ENCODE measurements at regions of chr1 and their contacts with region 1.

Region 1: DNA sequence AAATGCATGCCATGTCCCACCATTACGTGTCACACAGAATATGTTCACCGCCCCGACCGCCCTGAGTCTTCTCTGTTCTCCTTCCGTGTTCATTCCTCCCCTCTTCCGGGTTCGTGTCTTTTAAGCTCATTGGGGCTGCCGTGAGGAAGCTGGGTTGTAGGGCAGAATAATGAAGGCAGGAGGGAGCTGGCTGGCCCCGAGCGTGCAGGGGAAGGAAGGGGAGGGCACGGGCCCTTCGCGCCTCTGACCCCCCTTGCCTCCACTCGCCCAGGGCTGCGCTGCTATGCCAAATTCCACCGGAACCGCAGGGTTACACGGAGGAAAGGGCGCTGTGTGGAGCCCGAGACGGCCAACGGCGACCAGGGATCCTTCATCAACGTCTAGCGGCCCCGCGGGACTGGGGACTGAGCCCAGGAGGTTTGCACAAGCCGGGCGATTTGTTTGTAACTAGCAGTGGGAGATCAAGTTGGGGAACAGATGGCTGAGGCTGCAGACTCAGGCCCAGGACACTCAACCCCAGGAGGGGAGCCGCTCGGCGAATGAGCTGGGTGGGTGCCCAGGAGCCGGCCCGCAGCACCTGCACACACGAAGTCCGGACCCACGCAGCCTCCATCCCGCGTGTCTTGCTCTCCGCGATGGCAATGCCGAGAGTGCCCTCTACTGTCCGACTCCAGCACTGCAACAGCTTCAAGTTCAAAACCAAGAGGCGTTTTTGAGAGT is 16.5 kb upstream of the AGTRAP start:
- DNase-seq: peak; percentile 83 to 94 (median 90)
- H3K4me3 ChIP-seq: peak overlapping the region; percentile 15 to 74 (median 65)
- H3K27ac ChIP-seq: peak overlapping the region in 1 of 2 experiments; percentile 40
- H3K4me1 ChIP-seq: peaks cover 0 to 19% (median 14%) of the 10 kb centered on the region in 4 experiments
- H3K27me3 ChIP-seq: peaks cover 0 to 2% (median 0%) of the 10 kb centered on the region in 5 experiments

Region 2: DNA sequence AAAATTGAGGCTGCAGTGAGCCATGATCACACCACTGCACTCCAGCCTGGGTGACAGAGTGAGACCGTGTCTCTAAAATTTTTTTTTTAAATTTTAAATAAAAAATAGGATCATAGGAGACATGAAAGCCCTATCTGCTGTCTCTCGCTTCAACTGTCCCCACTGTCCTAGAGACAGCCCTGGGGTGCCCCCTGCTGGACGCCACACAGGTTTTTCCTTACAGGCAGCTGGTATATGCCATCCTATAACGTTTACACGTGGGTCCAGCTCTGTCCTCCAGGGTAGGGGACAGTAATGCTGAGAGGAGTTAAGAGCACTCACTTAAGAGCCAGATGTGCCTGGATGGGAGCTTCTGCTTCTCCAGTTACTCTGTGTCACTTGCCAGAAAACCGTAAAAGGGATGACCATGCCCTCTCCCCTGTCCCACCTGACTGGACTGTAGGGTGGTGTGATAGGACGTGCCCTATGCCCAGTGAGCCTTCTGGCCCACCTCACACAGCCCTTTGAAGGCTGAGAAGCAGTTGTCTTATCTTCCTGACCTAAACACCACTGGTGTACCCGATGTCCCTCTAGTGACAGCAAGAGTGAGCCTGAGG is 73.7 kb before region 1 on chr1:
- CTCF ChIA-PET with region 1: interaction called, 25 read pairs
- POLR2A ChIA-PET with region 1: no interaction called
- DNase-seq: peak; percentile 74 to 90 (median 84)
- H3K4me3 ChIP-seq: no peak overlapping the region
- H3K27ac ChIP-seq: no peak overlapping the region
- H3K4me1 ChIP-seq: peaks cover 0 to 14% (median 9%) of the 10 kb centered on the region in 4 experiments
- H3K27me3 ChIP-seq: peaks cover 0 to 32% (median 11%) of the 10 kb centered on the region in 5 experiments

Region 3: DNA sequence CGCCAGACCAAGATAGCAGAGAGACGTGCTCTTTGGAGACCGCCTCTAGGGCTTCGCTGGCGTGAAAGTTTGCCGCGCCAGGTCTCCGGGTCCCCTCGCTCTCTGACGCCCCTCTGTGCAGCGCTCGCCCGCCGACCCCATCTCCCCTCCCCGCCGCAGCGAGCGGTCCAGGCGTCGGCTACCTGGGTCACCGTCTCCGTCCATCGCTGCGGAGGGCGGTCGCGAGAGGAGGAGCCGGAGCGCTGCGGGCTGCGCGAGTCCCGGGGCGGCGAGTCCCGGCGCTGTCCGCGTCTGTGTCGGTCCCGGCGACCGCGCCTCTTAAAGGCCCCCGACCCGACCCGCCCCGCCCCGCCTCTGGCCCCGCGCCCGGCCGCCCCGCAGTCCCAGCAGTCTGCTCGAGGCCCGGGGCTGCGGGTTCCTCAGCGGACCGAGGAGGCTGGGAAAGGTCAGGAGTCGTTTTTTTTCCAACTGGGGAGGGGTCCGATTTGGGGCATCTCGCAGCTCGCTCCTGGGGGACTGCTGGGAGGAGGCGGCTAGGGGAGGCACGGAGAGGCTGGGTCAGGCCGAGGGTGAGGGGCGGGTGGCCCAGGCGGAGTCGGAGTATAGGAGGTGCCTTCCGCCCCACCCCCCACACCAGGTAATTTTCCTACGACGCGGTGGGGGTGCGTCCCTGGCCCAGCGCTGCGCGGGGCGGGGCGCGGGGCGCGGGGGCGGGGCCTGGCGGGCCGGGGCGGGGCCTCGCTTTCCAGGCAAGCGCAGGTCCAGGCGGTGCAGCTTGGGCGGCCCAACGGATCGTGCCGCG is 65.1 kb before region 1 on chr1 and contains the starts of genes FBXO2 and FBXO44:
- CTCF ChIA-PET with region 1: interaction called, 25 read pairs
- POLR2A ChIA-PET with region 1: no interaction called
- DNase-seq: peak in 1 of 3 donors; percentile 36
- H3K4me3 ChIP-seq: peak within 1 kb of the TSS; percentile 18 to 75 (median 60)
- H3K27ac ChIP-seq: no peak within 1 kb of the TSS
- H3K4me1 ChIP-seq: peaks cover 0 to 26% (median 25%) of the 10 kb centered on the region in 4 experiments
- H3K27me3 ChIP-seq: peaks cover 2 to 38% (median 11%) of the 10 kb centered on the region in 5 experiments

Region 4: DNA sequence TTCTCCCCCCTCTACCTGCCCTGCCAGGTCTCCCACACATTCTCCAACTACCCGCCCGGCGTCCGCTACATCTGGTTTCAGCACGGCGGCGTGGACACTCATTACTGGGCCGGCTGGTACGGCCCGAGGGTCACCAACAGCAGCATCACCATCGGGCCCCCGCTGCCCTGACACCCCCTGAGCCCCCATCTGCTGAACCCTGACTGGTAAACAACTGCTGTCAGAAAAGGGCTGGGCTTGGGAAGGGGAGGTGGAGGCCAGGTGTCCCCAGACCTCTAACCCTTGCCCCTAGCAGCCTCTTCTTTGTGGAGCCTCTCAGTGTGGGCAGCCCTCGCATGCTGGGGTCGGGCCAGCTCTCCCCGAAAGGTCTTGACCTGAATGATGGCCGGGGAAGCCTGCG is 58.4 kb before region 1 on chr1:
- CTCF ChIA-PET with region 1: interaction called, 33 read pairs
- POLR2A ChIA-PET with region 1: interaction called, 6 read pairs
- DNase-seq: no peak
- H3K4me3 ChIP-seq: no peak overlapping the region
- H3K27ac ChIP-seq: no peak overlapping the region
- H3K4me1 ChIP-seq: peaks cover 0 to 13% (median 9%) of the 10 kb centered on the region in 4 experiments
- H3K27me3 ChIP-seq: no peaks in the 10 kb centered on the region

Region 5: DNA sequence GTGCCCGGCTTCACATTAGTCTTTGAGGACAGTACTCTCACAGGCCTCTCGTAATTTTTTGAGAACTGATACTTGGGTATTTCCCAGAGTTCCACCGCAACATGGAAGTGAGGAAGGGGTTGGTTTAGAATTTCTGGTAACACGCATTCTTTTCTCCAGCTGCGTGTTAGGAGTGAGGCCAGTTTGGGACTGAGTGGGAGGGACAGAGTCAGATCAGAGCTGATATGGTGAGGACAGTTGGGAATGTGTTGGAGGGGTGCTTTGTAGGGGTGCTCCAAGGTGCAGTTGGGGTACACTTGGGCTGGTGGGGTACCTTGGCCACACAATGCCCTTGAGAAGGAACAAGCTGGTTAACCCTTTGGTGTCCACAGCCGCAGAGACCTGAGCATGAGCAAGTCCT is 48.7 kb before region 1 on chr1:
- CTCF ChIA-PET with region 1: interaction called, 10 read pairs
- POLR2A ChIA-PET with region 1: no interaction called
- DNase-seq: no peak
- H3K4me3 ChIP-seq: no peak overlapping the region
- H3K27ac ChIP-seq: no peak overlapping the region
- H3K4me1 ChIP-seq: no peaks in the 10 kb centered on the region
- H3K27me3 ChIP-seq: no peaks in the 10 kb centered on the region

Region 6: GRCh38 chr1:11681071-11681771 is 38.3 kb before region 1 on chr1 and contains the start of gene MAD2L2:
- CTCF ChIA-PET with region 1: interaction called, 12 read pairs
- POLR2A ChIA-PET with region 1: no interaction called
- DNase-seq: peak; percentile 78 to 90 (median 88)
- H3K4me3 ChIP-seq: peak within 1 kb of the TSS; percentile 49 to 92 (median 87)
- H3K27ac ChIP-seq: peak within 1 kb of the TSS in 1 of 2 experiments; percentile 71
- H3K4me1 ChIP-seq: peaks cover 3 to 22% (median 17%) of the 10 kb centered on the region in 4 experiments
- H3K27me3 ChIP-seq: peaks cover 0 to 6% (median 0%) of the 10 kb centered on the region in 5 experiments

Region 7: GRCh38 chr1:11707621-11708276 is 11.7 kb before region 1 on chr1:
- CTCF ChIA-PET with region 1: interaction called, 24 read pairs
- POLR2A ChIA-PET with region 1: no interaction called
- DNase-seq: peak; percentile 35 to 70 (median 70)
- H3K4me3 ChIP-seq: no peak overlapping the region
- H3K27ac ChIP-seq: no peak overlapping the region
- H3K4me1 ChIP-seq: peaks cover 0 to 4% (median 1%) of the 10 kb centered on the region in 4 experiments
- H3K27me3 ChIP-seq: peaks cover 0 to 24% (median 20%) of the 10 kb centered on the region in 5 experiments

Measured in common myeloid progenitor, CD34-positive (primary cell).